Thyroid gland (tissue), 4 donors: ENCODE measurements at regions of chr16 and their contacts with region 1.

Region 1: DNA sequence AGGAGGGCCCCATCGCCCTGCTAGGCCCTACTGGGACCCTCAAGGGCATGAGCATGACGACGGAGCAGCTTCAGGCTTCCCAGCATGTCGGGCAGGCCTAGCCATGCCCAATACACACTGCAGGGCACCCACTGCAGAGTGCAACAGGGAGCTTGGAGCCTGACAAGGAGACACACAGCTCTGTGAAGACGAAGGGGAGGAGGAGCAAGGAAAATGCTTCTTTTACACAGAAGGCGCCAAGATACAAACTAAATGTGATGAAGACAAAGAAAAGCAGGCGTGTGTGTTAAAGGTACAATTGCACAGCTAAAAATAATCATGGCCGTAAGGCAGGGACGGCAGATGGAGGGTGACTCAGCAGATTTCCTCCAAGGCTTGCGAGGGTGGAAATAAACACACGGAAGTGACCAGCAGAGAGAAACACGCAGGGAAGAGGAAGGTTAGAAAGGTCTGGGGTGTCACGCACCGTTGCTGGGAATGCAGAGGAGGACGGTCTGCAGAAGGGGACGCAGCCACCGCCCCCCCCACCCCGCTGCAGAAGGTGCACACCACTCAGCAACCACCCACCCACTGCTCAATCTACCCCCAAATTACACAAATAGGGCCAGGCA is 108.5 kb downstream of the ZNF778 start:
- DNase-seq: peak; percentile 47 to 58
- H3K4me3 ChIP-seq: no peak overlapping the region
- H3K27ac ChIP-seq: peak overlapping the region; percentile 62 to 80 (median 64)
- H3K4me1 ChIP-seq: peaks cover 38 to 59% of the 10 kb centered on the region in 2 donors
- H3K27me3 ChIP-seq: no peaks in the 10 kb centered on the region
- CTCF ChIP-seq: no peak
- POLR2A ChIP-seq: no peak

Region 2: DNA sequence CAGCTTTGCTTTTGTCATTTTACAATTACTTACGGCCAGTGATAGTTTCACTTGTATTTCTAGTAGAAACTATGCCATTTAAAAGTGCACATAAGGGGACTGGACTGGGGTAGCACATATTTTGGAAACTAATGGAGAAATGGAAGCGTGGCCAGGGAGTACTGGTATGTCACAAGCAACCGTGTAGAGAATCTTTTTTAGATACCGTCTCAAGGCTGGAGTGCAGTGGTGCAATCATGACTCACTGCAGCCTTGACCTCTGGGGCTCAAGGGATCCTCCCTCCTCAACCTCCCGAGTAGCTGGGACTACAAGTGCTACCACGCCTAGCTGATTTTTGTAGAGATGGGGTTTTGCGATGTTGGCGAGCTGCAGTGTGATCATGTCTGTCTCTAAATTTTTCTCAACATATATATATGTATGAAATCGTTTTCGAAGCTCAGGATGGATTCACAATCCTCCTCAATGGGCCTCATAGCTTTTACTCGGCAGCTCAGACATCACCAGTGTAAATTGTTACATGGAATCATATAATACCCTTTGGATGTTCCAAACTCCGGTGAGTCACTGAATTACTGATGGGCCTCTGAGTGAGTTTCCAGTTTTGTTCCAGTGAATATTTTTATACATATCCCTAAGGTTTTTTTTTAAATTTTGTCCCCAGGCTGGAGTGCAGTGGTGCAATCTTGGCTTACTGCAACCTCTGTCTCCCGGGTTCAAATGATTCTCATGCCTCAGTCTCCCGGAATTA is 56.8 kb before region 1 on chr16:
- intact Hi-C with region 1: no loop called
- DNase-seq: no peak
- H3K4me3 ChIP-seq: no peak overlapping the region
- H3K27ac ChIP-seq: no peak overlapping the region
- H3K4me1 ChIP-seq: no peaks in the 10 kb centered on the region
- H3K27me3 ChIP-seq: no peaks in the 10 kb centered on the region
- CTCF ChIP-seq: no peak
- POLR2A ChIP-seq: no peak

Region 3: DNA sequence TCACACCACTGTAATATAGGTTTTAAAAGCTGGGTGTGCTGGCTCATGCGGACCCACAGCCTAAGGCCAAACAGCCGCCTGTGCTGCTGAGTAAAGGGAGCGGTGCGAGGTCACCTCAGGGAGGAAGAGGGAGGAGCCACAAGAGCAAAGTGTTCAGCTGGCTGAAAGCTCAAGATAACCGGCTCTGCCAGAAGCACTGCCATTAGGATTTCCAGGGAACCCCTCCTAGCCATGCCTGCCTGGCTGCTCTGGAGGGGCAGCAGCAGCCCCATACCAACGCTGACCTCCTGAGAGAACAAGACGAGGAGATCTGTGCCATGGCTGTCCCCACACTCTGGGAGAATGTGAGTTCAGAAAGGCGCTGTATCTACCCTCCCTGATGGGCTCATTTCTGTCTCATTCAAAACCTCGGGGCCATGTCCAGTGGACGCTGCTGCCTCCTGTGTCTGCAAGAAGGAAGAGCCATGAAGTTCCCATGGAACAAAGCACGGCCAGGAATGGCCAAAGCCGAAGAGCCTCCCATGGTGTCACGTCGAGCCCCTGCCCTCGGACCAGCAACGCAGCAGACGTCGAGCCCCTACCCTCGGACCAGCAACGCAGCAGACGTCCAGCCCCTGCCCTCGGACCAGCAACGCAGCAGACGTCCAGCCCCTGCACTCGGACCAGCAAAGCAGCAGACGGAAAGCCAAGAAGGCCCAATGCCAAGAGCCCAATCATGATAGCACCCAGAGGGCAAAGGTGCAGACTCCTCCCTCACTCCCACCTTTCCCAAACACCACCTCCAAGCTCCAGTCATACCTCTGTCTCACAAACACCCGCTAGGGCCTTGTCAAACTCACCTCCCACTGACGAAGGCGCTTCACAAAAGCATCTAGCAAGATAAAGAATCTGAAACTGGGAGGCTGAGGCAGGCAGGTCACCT is 57.4 kb after region 1 on chr16:
- intact Hi-C with region 1: no loop called
- DNase-seq: peak; percentile 51 to 64
- H3K4me3 ChIP-seq: no peak overlapping the region
- H3K27ac ChIP-seq: no peak overlapping the region
- H3K4me1 ChIP-seq: peaks cover 31 to 51% of the 10 kb centered on the region in 2 donors
- H3K27me3 ChIP-seq: no peaks in the 10 kb centered on the region
- CTCF ChIP-seq: no peak
- POLR2A ChIP-seq: no peak

Region 4: DNA sequence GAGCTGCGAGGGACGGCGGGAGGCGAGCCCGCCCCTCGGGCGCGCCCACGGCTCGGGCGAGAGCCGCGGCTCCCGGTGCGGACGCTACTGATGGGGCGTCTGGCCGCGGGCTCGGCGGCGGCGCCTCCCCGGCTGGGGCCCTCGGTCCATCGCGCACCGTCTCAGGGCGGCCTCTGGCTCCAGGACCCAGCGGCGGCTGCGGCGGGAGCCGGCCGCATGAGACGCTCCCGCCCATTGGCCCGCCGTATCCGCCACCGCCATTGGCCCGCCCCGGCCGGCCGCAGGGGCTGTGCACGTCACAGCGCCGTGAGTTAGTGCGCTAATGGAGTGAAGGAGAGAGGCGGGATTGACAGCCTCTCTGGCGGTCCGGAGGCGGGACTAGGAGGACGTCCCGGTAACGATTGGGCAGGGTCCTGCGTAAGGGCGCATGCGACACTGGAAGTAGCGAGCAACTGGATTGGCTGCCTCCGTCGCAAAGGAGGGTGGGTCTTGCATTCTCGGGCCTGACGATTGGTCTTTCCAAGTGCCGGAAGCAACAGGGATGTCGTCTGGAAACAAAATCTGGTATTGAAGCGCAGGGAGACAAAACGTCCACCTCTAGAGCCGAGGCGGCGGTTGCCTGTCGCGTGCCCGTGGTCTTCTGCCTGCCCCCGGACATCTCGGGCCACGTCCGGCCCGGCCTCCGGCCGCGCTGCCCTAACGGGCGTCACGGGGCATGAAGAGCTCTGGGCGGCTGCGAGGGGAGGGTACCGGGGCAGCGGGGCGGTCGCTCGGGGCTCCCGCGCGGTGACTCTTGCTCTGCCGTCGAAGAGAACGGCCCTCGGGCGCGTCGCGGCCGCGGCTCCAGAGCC is 164.6 kb after region 1 on chr16 and contains the start of gene ANKRD11:
- intact Hi-C with region 1: loop called (anchors 5 kb)
- DNase-seq: peak; percentile 99 to 100
- H3K4me3 ChIP-seq: peak within 1 kb of the TSS; percentile 49 to 87 (median 81)
- H3K27ac ChIP-seq: peak within 1 kb of the TSS; percentile 90 to 96 (median 92)
- H3K4me1 ChIP-seq: peaks cover 28 to 33% of the 10 kb centered on the region in 2 donors
- H3K27me3 ChIP-seq: no peaks in the 10 kb centered on the region
- CTCF ChIP-seq: no peak
- POLR2A ChIP-seq: peak; percentile 52 to 92
- total RNA-seq, gene ANKRD11: 62.1 to 90.4 (median 75.0) TPM

Region 5: GRCh38 chr16:89556750-89557689 is 231.1 kb after region 1 on chr16:
- intact Hi-C with region 1: loop called (anchors 10 kb)
- DNase-seq: peak; percentile 68 to 69
- H3K4me3 ChIP-seq: no peak overlapping the region
- H3K27ac ChIP-seq: no peak overlapping the region
- H3K4me1 ChIP-seq: peaks cover 10 to 15% of the 10 kb centered on the region in 2 donors
- H3K27me3 ChIP-seq: no peaks in the 10 kb centered on the region
- CTCF ChIP-seq: peak; percentile 28 to 68 (median 52)
- POLR2A ChIP-seq: no peak